Common myeloid progenitor, CD34-positive (primary cell): ENCODE measurements at regions of chr11 and their contacts with region 1.

Region 1: DNA sequence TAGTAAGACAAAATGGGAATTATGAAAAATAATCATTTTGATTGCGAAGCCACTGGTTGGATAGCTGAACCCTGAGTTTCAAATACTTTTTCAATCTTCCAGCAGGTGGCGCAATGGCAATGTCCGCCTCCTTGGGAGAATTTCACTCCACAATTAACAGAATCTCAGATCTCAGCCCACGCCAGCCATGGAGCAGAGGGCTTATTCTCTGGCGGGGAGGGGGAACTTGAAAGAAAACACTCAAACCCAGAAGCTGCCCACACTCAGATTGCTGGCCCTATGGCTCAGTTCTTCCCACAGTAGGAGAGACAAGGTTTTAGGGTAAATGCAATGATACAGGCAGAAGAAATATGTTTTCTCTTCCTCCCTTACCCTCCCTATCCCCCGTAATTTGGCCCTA is 38.7 kb upstream of the RCN1 start:
- DNase-seq: peak; percentile 61 to 77 (median 69)
- H3K4me3 ChIP-seq: no peak overlapping the region
- H3K27ac ChIP-seq: no peak overlapping the region
- H3K4me1 ChIP-seq: peaks cover 0 to 23% (median 17%) of the 10 kb centered on the region in 4 experiments
- H3K27me3 ChIP-seq: no peaks in the 10 kb centered on the region

Region 2: GRCh38 chr11:32071811-32072210 is 19.6 kb after region 1 on chr11:
- CTCF ChIA-PET with region 1: interaction called, 47 read pairs
- POLR2A ChIA-PET with region 1: no interaction called
- DNase-seq: no peak
- H3K4me3 ChIP-seq: no peak overlapping the region
- H3K27ac ChIP-seq: no peak overlapping the region
- H3K4me1 ChIP-seq: peaks cover 0 to 31% (median 5%) of the 10 kb centered on the region in 4 experiments
- H3K27me3 ChIP-seq: peaks cover 0 to 12% (median 0%) of the 10 kb centered on the region in 5 experiments

Region 3: DNA sequence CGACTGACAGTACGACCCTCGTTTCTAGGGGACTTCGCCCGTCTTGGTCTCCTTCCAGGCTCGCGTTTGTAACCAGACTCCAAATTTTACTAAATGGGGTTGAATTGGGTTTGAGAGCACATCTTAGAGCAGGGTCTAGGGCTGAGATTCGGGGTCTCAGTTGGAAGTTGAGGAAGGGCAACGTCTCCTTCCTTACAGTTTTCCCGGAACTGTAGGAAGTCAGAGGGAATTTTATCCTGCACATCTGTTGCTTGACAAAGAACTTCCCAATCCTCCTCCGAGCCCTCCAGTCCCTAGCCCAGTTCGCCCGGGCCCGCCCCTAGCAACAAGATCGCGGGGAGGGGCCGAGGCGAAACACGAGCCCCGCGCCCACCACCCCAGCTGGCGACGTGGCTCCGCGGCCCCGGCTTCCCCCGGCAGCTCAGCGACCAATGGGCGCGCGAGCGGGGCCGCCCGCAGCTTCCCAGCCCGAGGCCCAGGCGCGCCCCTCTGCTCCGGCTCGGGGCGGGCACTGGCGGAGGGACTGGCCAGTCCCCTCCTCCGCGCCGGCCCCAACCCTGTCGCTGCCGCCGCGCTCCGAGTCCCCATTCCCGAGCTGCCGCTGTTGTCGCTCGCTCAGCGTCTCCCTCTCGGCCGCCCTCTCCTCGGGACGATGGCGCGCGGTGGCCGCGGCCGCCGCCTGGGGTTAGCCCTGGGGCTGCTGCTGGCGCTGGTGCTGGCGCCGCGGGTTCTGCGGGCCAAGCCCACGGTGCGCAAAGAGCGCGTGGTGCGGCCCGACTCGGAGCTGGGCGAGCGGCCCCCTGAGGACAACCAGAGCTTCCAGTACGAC is 38.5 kb after region 1 on chr11 and contains the start of gene RCN1:
- CTCF ChIA-PET with region 1: interaction called, 18 read pairs
- POLR2A ChIA-PET with region 1: no interaction called
- DNase-seq: peak; percentile 59 to 88 (median 82)
- H3K4me3 ChIP-seq: peak within 1 kb of the TSS; percentile 73 to 90 (median 81)
- H3K27ac ChIP-seq: peak within 1 kb of the TSS; percentile 69 to 88
- H3K4me1 ChIP-seq: peaks cover 5 to 41% (median 31%) of the 10 kb centered on the region in 4 experiments
- H3K27me3 ChIP-seq: peaks cover 0 to 2% (median 0%) of the 10 kb centered on the region in 5 experiments

Region 4: GRCh38 chr11:32154275-32154674 is 102.1 kb after region 1 on chr11:
- CTCF ChIA-PET with region 1: interaction called, 12 read pairs
- POLR2A ChIA-PET with region 1: no interaction called
- DNase-seq: peak; percentile 23 to 44 (median 37)
- H3K4me3 ChIP-seq: no peak overlapping the region
- H3K27ac ChIP-seq: no peak overlapping the region
- H3K4me1 ChIP-seq: peaks cover 0 to 3% (median 1%) of the 10 kb centered on the region in 4 experiments
- H3K27me3 ChIP-seq: peaks cover 0 to 16% (median 0%) of the 10 kb centered on the region in 5 experiments

Region 5: GRCh38 chr11:32162351-32162750 is 110.1 kb after region 1 on chr11:
- CTCF ChIA-PET with region 1: interaction called, 246 read pairs
- POLR2A ChIA-PET with region 1: no interaction called
- DNase-seq: no peak
- H3K4me3 ChIP-seq: no peak overlapping the region
- H3K27ac ChIP-seq: no peak overlapping the region
- H3K4me1 ChIP-seq: no peaks in the 10 kb centered on the region
- H3K27me3 ChIP-seq: peaks cover 0 to 2% (median 0%) of the 10 kb centered on the region in 5 experiments

Region 6: DNA sequence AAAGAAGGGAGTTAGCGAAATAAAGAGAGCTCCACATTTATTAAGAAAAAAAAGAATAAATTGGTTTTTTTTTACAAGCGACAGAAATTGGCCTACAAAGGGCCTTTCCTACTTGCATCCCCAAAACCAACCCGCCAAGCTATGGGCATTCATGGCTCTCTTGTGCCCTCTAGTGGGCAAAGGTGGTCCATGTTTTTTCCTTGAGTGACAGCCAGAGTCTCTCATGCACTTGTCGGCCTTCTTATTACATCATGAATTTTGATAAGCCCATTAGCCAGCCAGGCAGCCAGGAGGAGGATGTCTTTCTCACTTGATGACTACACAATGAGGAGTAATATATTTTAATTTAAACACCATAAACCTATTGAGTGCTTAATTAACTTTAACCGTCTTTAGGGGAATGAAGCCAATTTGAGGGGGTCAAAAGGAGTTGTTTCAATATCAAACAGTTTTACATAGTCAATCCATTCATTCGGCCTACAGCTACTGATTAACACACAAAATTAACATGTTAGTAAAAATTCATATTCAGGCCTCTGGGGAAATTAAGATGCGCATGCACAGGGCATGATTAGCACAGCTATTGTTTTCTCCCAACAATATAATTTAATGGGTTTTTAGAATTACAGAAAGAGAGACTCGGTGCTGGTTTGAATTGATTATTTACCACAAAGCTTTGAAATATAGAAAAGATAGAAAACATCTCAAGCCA is 124.2 kb after region 1 on chr11:
- CTCF ChIA-PET with region 1: interaction called, 246 read pairs
- POLR2A ChIA-PET with region 1: no interaction called
- DNase-seq: peak; percentile 89 to 93 (median 90)
- H3K4me3 ChIP-seq: no peak overlapping the region
- H3K27ac ChIP-seq: no peak overlapping the region
- H3K4me1 ChIP-seq: peaks cover 0 to 11% (median 2%) of the 10 kb centered on the region in 4 experiments
- H3K27me3 ChIP-seq: peaks cover 0 to 2% (median 0%) of the 10 kb centered on the region in 5 experiments

Region 7: GRCh38 chr11:32184041-32184722 is 132.0 kb after region 1 on chr11:
- CTCF ChIA-PET with region 1: interaction called, 246 read pairs
- POLR2A ChIA-PET with region 1: no interaction called
- DNase-seq: no peak
- H3K4me3 ChIP-seq: no peak overlapping the region
- H3K27ac ChIP-seq: no peak overlapping the region
- H3K4me1 ChIP-seq: peaks cover 0 to 24% (median 9%) of the 10 kb centered on the region in 4 experiments
- H3K27me3 ChIP-seq: peaks cover 0 to 5% (median 0%) of the 10 kb centered on the region in 5 experiments